HEK293 (cell line): ENCODE measurements at regions of chr9 and their contacts with region 1.

Region 1: GRCh38 chr9:114405294-114406034 is 17.7 kb upstream of the AKNA start:
- H3K4me3 ChIP-seq: no peak overlapping the region
- H3K27ac ChIP-seq: no peak overlapping the region
- H3K4me1 ChIP-seq: no peaks in the 10 kb centered on the region
- CTCF ChIP-seq: peak; percentile 81

Region 2: GRCh38 chr9:114117996-114118830 is 287.3 kb before region 1 on chr9:
- CTCF ChIA-PET with region 1: no interaction called
- POLR2A ChIA-PET with region 1: no interaction called
- H3K4me3 ChIP-seq: no peak overlapping the region
- H3K27ac ChIP-seq: no peak overlapping the region
- H3K4me1 ChIP-seq: no peaks in the 10 kb centered on the region
- CTCF ChIP-seq: no peak

Region 3: DNA sequence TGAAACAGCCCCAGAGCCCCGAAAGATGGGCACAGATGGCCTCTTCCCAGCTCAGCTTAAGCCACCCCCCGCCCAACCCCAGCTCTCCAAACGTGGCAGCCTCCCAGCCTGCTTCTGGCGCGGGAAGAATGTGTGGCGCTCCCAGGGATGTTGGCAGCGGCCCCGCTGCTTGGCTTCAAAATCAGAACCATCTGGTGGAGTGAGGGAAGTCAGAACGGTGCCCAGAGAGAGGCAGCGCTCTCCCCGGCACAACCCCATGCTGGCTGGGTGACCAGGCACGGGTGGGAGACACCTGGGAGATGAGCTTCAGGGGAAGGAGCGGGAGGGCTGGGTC is 155.3 kb before region 1 on chr9:
- CTCF ChIA-PET with region 1: no interaction called
- POLR2A ChIA-PET with region 1: no interaction called
- H3K4me3 ChIP-seq: no peak overlapping the region
- H3K27ac ChIP-seq: no peak overlapping the region
- H3K4me1 ChIP-seq: no peaks in the 10 kb centered on the region
- CTCF ChIP-seq: no peak

Region 4: GRCh38 chr9:114339130-114339908 is 66.1 kb before region 1 on chr9:
- CTCF ChIA-PET with region 1: interaction called, 20 read pairs
- POLR2A ChIA-PET with region 1: interaction called, 3 read pairs
- H3K4me3 ChIP-seq: no peak overlapping the region
- H3K27ac ChIP-seq: no peak overlapping the region
- H3K4me1 ChIP-seq: no peaks in the 10 kb centered on the region
- CTCF ChIP-seq: peak; percentile 49

Region 5: GRCh38 chr9:114434878-114435311 is 29.4 kb after region 1 on chr9:
- CTCF ChIA-PET with region 1: interaction called, 15 read pairs
- POLR2A ChIA-PET with region 1: no interaction called
- H3K4me3 ChIP-seq: no peak overlapping the region
- H3K27ac ChIP-seq: no peak overlapping the region
- H3K4me1 ChIP-seq: no peaks in the 10 kb centered on the region
- CTCF ChIP-seq: peak; percentile 86

Region 6: DNA sequence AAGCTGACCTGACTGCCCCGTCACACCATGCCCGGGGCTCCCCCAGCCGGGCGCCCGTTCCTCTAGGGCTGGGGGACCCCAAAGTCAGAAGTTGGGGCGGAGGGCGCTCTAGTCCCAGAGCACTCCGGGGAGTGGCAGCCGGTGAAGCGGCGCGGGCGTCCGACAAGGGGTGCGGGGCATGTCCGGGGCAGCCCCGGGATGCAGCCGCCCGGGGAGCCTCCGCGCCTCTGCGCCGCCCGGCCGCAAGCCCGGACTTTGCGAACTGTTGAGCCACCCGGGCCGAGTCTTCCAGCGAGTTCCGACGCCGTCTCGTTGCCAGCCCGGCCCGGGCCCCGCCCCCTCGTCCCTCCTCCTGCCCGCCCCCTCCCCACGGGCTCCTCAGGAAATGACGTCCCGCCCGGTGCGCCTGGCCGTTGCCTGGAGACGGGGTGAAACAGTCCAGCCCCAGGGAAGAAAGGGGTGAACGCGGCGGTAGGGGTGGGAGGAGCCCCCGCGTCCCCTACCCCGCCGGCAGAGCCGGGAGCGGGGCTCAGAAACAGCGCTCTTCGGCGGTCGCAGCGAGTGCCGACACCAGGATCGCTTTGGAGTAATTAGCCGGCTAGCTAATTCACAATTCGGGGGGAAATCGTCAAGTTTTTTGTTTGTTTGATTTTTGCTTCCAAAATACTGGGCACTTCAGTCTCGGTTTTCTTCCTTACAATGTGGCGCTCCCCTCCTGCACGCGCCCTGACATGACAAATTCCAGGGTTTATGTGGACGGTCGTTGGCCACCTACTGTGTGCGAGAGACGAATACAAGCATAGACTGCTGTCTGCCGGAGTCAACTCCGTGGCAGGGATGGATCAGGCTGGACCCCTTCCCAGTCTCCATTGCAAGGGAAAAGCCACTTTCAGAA is 100.0 kb after region 1 on chr9 and contains the start of gene WHRN:
- CTCF ChIA-PET with region 1: interaction called, 21 read pairs
- POLR2A ChIA-PET with region 1: no interaction called
- H3K4me3 ChIP-seq: peak within 1 kb of the TSS; percentile 66
- H3K27ac ChIP-seq: no peak within 1 kb of the TSS; the same call in 1 of the 2 replicates
- H3K4me1 ChIP-seq: peaks cover 10% of the 10 kb centered on the region
- CTCF ChIP-seq: no peak

Region 7: GRCh38 chr9:114662081-114662989 is 256.9 kb after region 1 on chr9:
- CTCF ChIA-PET with region 1: interaction called, 15 read pairs
- POLR2A ChIA-PET with region 1: no interaction called
- H3K4me3 ChIP-seq: no peak overlapping the region
- H3K27ac ChIP-seq: no peak overlapping the region
- H3K4me1 ChIP-seq: no peaks in the 10 kb centered on the region
- CTCF ChIP-seq: 0 out of 2 replicates have a peak, but pooled peaks have one; percentile 23

Region 8: GRCh38 chr9:115008536-115009270 is 603.2 kb after region 1 on chr9:
- CTCF ChIA-PET with region 1: interaction called, 16 read pairs
- POLR2A ChIA-PET with region 1: no interaction called
- H3K4me3 ChIP-seq: no peak overlapping the region
- H3K27ac ChIP-seq: no peak overlapping the region
- H3K4me1 ChIP-seq: peaks cover 3% of the 10 kb centered on the region
- CTCF ChIP-seq: no peak